ENCODE measurements at regions of chr13 and their contacts with region 1.

Region 1: DNA sequence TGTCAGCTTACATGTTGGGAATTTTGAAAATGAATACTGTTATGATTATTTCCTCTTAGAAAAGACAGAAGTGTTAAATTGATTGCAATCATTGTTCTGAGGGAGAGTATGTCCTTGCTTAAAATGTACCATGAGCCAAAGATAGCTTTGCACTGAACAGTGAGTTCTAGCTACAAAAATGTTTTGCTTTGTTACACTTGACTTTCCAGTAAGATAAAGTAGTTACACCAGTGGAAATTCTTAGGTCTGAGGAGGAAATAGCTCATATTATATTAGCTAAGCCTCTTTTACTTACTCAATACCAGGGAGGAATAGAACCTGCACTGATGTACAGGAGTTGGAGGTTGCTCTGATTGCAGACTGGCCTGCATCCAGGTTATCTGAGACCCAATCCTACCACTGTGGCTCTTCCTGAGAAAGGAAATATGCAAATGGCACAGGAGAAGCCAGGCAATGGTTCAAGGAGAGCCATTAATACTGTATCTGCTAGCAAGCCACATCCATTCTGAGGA is 53.0 kb upstream of the FBXL3 start:
- DNase-seq: no peak
- ATAC-seq: no peak
- H3K4me3 Mint-ChIP-seq: no peak overlapping the region
- H3K27ac Mint-ChIP-seq: no peak overlapping the region
- H3K4me1 Mint-ChIP-seq: no peaks in the 10 kb centered on the region
- H3K27me3 Mint-ChIP-seq: no peaks in the 10 kb centered on the region
- CTCF ChIP-seq: no peak

Region 2: GRCh38 chr13:76438050-76438449 is 641.9 kb before region 1 on chr13:
- CTCF ChIA-PET with region 1: no interaction called
- POLR2A ChIA-PET with region 1: no interaction called
- intact Hi-C with region 1: no loop called
- DNase-seq: no peak
- ATAC-seq: no peak
- H3K4me3 Mint-ChIP-seq: no peak overlapping the region
- H3K27ac Mint-ChIP-seq: no peak overlapping the region
- H3K4me1 Mint-ChIP-seq: peaks cover 2% of the 10 kb centered on the region
- H3K27me3 Mint-ChIP-seq: no peaks in the 10 kb centered on the region
- CTCF ChIP-seq: no peak

Region 3: DNA sequence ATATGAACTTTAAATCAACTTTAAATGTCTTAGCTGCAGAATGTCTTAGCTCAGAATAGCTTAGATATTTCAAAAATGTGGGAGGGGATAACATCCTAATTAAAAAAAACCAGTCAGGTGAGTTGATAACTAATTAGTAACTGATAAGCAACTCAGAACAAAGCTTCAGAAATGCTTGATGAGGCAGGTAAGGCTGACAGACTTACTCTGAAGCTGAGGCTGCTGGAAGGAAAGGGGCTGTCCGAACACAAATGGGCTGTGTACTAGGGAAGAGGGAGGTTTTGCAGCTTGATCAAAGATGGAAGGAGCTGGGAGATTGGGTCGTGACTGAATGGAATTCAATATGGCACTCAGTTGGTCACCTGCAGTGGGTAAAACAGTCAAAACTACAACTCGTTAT is 38.2 kb after region 1 on chr13:
- CTCF ChIA-PET with region 1: no interaction called
- POLR2A ChIA-PET with region 1: no interaction called
- intact Hi-C with region 1: loop called (anchors 5 kb)
- DNase-seq: no peak
- ATAC-seq: no peak
- H3K4me3 Mint-ChIP-seq: no peak overlapping the region
- H3K27ac Mint-ChIP-seq: no peak overlapping the region
- H3K4me1 Mint-ChIP-seq: peaks cover 6% of the 10 kb centered on the region
- H3K27me3 Mint-ChIP-seq: no peaks in the 10 kb centered on the region
- CTCF ChIP-seq: no peak

Measured in activated B cell treated with CpG ODN at 0.5 μM for 24 hours (primary cell).